ENCODE measurements at regions of chr17 and their contacts with region 1.

Region 1: GRCh38 chr17:37557482-37557881 is 51.7 kb downstream of the SYNRG start:
- DNase-seq: no peak
- ATAC-seq: no peak
- H3K4me3 ChIP-seq: no peak overlapping the region
- H3K4me3 Mint-ChIP-seq: no peak overlapping the region
- H3K27ac ChIP-seq: no peak overlapping the region
- H3K27ac Mint-ChIP-seq: peak overlapping the region in 1 of 9 donors; percentile 9
- H3K4me1 ChIP-seq: peaks cover 5 to 7% of the 10 kb centered on the region in 2 donors
- H3K4me1 Mint-ChIP-seq: peaks cover 7 to 40% (median 27%) of the 10 kb centered on the region in 7 donors
- H3K27me3 ChIP-seq: no peaks in the 10 kb centered on the region
- H3K27me3 Mint-ChIP-seq: no peaks in the 10 kb centered on the region

Region 2: DNA sequence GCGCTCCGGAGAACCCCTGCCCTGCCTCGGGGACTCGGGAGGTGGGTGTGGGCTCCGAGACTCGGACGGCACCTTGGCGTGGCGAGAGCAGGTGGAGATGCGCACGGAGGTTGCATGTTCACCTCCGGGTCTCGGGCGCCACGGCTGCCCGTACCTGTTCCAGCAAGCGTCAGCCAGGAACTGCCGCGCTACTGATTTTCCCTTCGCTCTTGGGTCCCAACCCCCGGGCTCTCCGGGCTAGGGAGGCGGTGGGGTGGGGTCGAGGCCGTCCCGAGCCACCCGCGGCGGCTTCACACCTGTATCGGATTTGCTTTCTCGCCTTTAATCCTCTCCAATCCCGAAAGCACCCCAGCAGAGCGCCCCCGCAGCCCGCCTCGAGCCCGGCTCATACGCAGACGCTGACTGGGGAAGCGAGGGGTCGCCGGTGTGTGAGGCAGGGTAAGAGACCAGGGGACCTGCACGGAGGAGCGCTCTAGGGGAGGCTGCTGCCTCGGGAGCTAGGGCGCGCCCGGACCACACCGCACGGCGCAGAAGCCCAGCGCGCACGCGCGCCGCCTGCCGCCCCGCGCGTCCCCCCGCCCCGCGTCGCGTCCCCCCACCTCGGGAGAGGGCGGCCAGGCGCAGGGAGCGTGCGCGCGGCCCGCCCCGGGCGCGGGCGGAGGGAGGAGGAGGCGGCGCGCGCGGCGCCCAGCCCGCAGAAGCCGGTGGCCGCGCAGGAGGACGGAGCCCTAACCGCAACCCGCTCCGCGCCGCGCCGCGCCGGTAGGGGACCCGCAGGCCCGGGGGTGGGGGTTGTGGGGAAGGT is 68.1 kb before region 1 on chr17 and contains the start of gene DUSP14:
- CTCF ChIA-PET with region 1: no interaction called
- POLR2A ChIA-PET with region 1: no interaction called
- intact Hi-C with region 1: no loop called
- DNase-seq: peak; percentile 72 to 86 (median 84)
- ATAC-seq: peak; percentile 88
- H3K4me3 ChIP-seq: peak within 1 kb of the TSS; percentile 67
- H3K4me3 Mint-ChIP-seq: peak within 1 kb of the TSS; percentile 91 to 98 (median 95)
- H3K27ac ChIP-seq: peak within 1 kb of the TSS; percentile 79
- H3K27ac Mint-ChIP-seq: peak within 1 kb of the TSS; percentile 81 to 95 (median 88)
- H3K4me1 ChIP-seq: peaks cover 19 to 20% of the 10 kb centered on the region in 2 donors
- H3K4me1 Mint-ChIP-seq: peaks cover 20 to 39% (median 27%) of the 10 kb centered on the region in 7 donors
- H3K27me3 ChIP-seq: no peaks in the 10 kb centered on the region
- H3K27me3 Mint-ChIP-seq: peaks cover 0 to 3% (median 0%) of the 10 kb centered on the region in 5 donors
- total RNA-seq, gene DUSP14: 4.3 to 11.7 (median 8.7) TPM

Region 3: GRCh38 chr17:37570527-37571093 is 13.1 kb after region 1 on chr17:
- CTCF ChIA-PET with region 1: no interaction called
- POLR2A ChIA-PET with region 1: no interaction called
- intact Hi-C with region 1: loop called in 1 of 2 experiments (anchors 2 kb)
- DNase-seq: peak in 5 of 9 donors; percentile 1 to 25 (median 6)
- ATAC-seq: peak; percentile 48
- H3K4me3 ChIP-seq: no peak overlapping the region
- H3K4me3 Mint-ChIP-seq: no peak overlapping the region
- H3K27ac ChIP-seq: no peak overlapping the region
- H3K27ac Mint-ChIP-seq: peak overlapping the region in 1 of 9 donors; percentile 41
- H3K4me1 ChIP-seq: no peaks in the 10 kb centered on the region
- H3K4me1 Mint-ChIP-seq: peaks cover 2 to 32% (median 11%) of the 10 kb centered on the region in 7 donors
- H3K27me3 ChIP-seq: no peaks in the 10 kb centered on the region
- H3K27me3 Mint-ChIP-seq: no peaks in the 10 kb centered on the region

Region 4: GRCh38 chr17:37643118-37643766 is 85.8 kb after region 1 on chr17 and contains the start of gene DDX52:
- CTCF ChIA-PET with region 1: no interaction called
- POLR2A ChIA-PET with region 1: no interaction called
- intact Hi-C with region 1: no loop called
- DNase-seq: peak; percentile 75 to 88 (median 84)
- ATAC-seq: peak; percentile 99
- H3K4me3 ChIP-seq: peak within 1 kb of the TSS; percentile 89
- H3K4me3 Mint-ChIP-seq: peak within 1 kb of the TSS; percentile 89 to 98 (median 94)
- H3K27ac ChIP-seq: peak within 1 kb of the TSS; percentile 85
- H3K27ac Mint-ChIP-seq: peak within 1 kb of the TSS; percentile 63 to 97 (median 93)
- H3K4me1 ChIP-seq: peaks cover 8 to 10% of the 10 kb centered on the region in 2 donors
- H3K4me1 Mint-ChIP-seq: peaks cover 24 to 58% (median 39%) of the 10 kb centered on the region in 7 donors
- H3K27me3 ChIP-seq: peaks cover 0 to 9% of the 10 kb centered on the region in 2 donors
- H3K27me3 Mint-ChIP-seq: peaks cover 20 to 43% (median 30%) of the 10 kb centered on the region in 5 donors
- total RNA-seq, gene DDX52: 20.8 to 34.0 (median 29.3) TPM